ENCODE measurements at regions of chr5 and their contacts with region 1.

Region 1: DNA sequence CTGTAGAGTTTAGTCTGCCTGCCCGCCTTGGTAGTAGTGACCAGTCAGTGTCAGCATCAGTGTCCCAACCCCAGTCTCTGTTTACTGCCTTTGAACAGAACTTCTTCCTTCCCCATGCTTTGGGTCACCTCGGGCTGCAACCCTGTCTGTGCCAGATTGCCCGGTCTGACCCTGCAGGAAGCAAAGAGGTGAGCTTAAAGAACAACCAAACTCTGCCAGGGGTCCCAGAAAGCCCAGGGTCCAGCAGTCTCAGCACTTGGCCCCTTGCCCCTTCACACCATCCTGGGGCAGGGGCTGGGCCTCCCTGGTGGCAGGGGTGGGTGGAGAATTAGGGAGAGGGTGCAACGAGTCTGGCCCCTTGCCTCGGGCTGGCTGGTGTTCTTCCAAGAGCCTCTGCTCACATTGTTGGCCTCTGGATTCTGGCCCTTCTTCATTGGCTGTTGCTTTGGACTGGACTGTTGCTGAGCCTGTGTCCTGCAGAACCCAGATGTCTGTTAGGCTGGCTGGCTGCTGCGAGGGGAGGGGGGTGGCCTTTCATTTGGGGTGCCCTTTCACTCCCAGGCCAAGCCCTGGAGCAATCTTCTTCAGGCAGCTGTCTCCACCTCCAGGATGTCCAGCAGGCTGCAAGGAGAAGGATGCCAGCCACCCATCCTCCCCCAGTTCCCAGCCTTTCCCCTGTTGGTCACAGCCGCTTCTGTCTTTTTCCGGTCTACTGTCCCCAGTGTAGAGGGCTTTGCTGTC is 51.2 kb downstream of the SAR1B start:
- DNase-seq: no peak
- H3K4me3 ChIP-seq: no peak overlapping the region
- H3K4me1 ChIP-seq: no peaks in the 10 kb centered on the region
- H3K27me3 ChIP-seq: no peaks in the 10 kb centered on the region

Region 2: DNA sequence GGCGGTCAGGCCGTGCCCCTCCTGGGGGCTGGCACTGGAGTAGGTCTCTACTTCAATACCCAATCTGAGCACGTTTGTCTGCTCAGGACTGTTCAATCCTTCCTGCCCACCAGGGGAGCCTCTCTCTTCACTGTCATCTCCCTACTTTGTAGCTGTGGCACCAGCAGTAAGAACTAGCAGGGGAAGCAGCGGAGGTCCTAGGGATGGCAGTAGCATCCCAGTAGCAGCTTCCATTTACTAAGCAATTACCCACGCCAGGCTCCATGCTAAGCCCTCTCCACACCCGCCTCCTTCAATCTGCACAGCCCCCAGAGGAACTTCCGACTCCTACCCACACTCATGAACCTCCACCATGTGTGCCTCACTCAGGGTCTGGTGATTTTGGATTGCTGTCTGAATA is 1000.8 kb before region 1 on chr5:
- in situ Hi-C with region 1: no loop called
- DNase-seq: no peak
- H3K4me3 ChIP-seq: no peak overlapping the region
- H3K4me1 ChIP-seq: no peaks in the 10 kb centered on the region
- H3K27me3 ChIP-seq: no peaks in the 10 kb centered on the region

Region 3: GRCh38 chr5:134304311-134304710 is 277.1 kb before region 1 on chr5:
- in situ Hi-C with region 1: loop called (anchors 5 kb)
- DNase-seq: no peak
- H3K4me3 ChIP-seq: no peak overlapping the region
- H3K4me1 ChIP-seq: no peaks in the 10 kb centered on the region; the same call in 1 of the 2 replicates
- H3K27me3 ChIP-seq: peaks cover 4% of the 10 kb centered on the region; the same call in 1 of the 2 replicates

Measured in HAP-1 (cell line).